Posterior vena cava (tissue), 2 donors: ENCODE measurements at regions of chr1 and their contacts with region 1.

Region 1: GRCh38 chr1:207828485-207829158 is 76.8 kb downstream of the CD46 start:
- DNase-seq: peak; percentile 92

Region 2: DNA sequence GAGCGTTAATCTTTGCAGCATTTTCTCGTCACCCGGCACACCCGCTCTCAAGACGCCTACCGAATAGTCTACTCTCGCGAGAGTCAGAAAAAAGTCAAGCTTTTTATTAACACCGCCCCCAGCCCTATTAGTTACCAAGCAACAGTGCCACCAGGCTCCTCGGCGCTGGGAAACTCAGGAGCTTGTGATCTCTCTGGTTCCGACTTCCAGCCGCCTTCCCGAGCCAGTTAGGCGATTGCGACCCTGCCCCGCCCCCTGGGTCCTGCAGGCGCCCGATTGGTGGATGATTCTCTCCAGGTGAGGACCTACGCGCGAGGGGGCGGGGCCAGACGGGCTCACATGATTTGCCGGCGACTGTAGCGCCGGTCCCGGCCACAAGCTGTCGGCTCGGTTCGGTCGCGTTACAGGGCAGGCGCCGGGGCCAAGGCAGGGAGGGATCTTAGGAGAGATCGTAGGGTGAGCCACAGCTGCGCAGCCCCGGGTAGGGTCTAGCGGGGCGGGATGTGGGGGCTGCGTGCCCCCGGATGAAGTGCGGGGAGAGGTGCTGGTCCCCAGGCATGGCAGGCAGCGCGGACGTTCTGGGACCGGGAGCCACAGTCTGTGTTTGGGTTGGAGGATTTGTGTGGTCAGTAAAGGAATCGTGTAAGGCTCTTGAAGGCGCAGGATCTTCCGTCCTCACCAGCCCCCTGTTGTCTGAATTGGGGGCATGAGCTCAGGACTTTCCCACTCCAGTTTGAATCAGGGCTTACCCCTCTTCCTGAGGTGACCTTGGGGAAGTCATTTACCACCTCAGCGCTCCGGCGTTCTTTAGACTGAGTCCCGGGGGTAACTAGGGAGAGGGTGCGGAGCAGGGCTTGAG is 775.5 kb before region 1 on chr1 and contains the start of gene PFKFB2:
- intact Hi-C with region 1: loop called in 1 of 2 experiments (anchors 10 kb)
- DNase-seq: peak; percentile 98
- total RNA-seq, gene PFKFB2: 10.2 to 13.0 TPM

Region 3: DNA sequence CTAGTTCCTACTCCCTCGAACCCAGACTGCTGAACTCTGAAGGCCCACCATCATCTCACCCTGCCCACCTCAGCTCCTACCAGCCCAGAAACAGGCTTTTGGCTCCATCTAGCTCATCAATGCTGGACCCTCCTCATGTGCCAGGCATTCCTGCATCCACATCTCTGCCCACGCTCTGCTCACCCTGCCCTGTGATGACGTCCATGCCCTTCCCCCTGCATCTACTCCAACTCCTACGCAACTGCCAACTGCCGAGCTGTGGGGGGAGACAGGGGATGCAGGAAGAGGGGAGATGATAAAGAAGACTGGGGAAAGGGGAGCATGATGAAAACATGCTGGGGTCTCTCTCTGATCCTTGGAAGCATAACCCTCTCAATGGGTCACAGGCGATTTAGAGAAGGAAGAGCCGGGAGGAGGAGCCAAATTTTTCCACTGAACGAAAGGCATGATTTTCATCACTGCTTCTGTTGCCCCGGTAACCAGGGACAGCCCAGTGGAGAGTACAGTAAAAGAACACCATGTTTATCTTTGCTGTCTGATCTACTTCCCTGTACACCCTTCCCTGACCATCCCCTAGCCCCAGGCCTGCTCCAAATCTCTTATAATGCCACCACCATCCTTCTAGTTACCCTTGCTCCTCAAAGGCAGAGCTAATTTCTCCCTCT is 38.0 kb after region 1 on chr1:
- intact Hi-C with region 1: loop called in 1 of 2 experiments (anchors 2 kb)
- DNase-seq: peak; percentile 85